Activated T-helper 2 cell treated with anti-CD3 and anti-CD28 coated beads, Interferon-gamma antibody, Interleukin-2, Interleukin-4, amounts not matched to agents 10 μg/mL and 5 μg/mL and 100 μg/mL, durations not matched to agents 14 hours and 24 hours and 36 hours (primary cell): ENCODE measurements at regions of chr3 and their contacts with region 1.

Region 1: DNA sequence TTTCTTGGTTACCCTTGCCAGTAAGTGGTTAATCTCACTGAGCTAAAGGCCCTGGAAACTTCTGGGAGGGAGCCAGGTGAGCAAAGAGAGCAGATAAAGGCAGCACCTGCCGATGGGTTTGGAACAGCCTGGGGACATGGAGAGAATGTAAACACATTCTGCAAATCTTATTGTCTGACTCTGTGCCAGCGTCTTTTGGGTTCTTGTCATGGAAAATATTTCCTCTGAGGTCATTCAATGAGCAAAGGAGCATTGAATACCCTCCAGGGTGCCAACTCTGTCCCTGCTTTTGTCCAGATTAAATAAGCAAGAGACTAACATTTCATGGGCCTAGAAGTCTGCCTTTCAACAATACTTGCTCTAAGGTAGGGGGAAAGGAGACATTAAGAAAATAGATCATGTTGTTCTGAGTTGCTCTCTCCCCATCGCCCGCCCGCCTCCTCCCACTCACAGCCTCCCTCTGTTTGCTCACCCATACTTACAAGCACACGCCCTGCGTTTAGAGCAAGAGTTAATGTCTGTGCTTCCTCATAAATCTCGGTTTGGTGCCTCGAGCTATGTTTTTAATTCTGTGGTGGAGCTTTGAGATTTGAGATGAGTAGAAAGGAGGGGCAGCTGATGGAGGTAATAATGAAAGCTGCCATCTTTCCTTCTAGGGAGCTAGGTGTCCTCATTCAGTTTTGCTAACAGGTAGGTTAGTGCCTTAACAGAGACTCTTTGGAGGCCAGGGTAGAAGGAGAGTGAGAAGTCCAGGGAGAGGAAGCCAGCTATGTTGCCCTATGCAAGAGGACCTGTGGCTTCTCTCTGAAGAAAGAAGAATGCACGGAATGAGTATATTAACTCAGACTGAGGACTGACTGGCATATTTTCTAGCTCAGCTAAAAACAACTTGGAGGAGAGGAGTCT is 132.9 kb downstream of the TPRG1 start:
- DNase-seq: no peak
- H3K4me3 Mint-ChIP-seq: peak overlapping the region; percentile 71
- H3K27ac Mint-ChIP-seq: peak overlapping the region; percentile 98
- H3K4me1 Mint-ChIP-seq: peaks cover 75% of the 10 kb centered on the region
- H3K27me3 Mint-ChIP-seq: no peaks in the 10 kb centered on the region

Region 2: GRCh38 chr3:189233225-189233858 is 71.4 kb before region 1 on chr3:
- intact Hi-C with region 1: loop called (anchors 2 kb)
- DNase-seq: no peak
- H3K4me3 Mint-ChIP-seq: no peak overlapping the region
- H3K27ac Mint-ChIP-seq: no peak overlapping the region
- H3K4me1 Mint-ChIP-seq: peaks cover 48% of the 10 kb centered on the region
- H3K27me3 Mint-ChIP-seq: peaks cover 18% of the 10 kb centered on the region

Region 3: DNA sequence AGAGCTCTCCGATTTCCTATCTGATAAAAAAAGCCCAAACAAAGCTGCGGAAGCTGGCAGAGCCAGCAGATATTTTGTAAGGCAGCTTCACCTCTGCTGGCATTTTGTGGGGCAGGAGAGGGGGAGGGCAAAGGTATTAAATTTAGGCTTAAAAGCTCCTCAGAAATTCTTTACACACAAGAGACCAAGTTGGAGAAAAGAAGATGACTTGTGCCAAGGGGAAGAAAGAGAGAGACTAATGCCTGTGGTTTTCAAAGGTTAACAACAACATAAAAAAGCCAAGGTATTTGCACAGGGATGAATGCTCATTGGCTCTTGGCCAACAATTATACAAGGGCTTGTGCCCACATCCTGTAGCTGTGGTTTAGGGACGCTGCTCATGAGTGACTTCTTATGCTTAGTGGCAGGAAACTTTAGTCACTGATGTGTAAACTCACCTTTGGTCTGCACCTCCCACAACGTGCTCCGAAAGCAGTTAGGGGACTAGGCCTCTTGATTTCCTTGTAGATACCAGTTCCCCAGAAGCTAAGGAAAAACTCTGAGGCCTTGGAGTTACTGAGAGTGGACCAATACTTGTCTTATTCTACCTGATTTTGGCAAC is 19.9 kb after region 1 on chr3:
- intact Hi-C with region 1: loop called (anchors 1 kb)
- DNase-seq: peak; percentile 88
- H3K4me3 Mint-ChIP-seq: peak overlapping the region; percentile 82
- H3K27ac Mint-ChIP-seq: peak overlapping the region; percentile 100
- H3K4me1 Mint-ChIP-seq: peaks cover 83% of the 10 kb centered on the region
- H3K27me3 Mint-ChIP-seq: no peaks in the 10 kb centered on the region

Region 4: DNA sequence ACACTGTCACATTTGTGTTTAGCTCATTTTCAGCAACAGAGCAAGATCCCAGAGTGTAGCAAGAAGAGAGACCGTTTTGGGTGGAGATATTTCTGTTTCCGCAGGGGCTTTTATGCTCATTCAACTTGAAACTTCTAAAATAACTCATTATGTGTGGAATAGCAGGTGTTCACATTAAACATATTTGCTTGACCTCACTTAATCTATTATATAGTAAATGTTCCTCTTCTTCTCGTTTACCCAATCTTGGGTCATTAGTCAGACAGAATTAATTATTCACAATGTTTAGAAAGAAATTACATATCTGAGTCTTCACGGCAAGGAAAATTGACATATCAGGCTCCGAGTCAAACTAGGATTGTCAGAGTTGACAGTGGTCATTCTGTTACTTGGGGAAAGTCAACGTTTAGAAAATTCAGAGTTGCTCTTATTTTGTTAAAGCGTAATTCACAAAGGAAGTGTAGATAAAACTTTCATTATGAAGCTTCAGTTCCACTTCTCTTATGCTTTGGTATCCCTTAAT is 90.0 kb after region 1 on chr3:
- intact Hi-C with region 1: loop called (anchors 2 kb)
- DNase-seq: no peak
- H3K4me3 Mint-ChIP-seq: peak overlapping the region; percentile 6
- H3K27ac Mint-ChIP-seq: peak overlapping the region; percentile 84
- H3K4me1 Mint-ChIP-seq: peaks cover 40% of the 10 kb centered on the region
- H3K27me3 Mint-ChIP-seq: no peaks in the 10 kb centered on the region

Region 5: GRCh38 chr3:189621948-189622603 is 317.4 kb after region 1 on chr3:
- intact Hi-C with region 1: loop called (anchors 1 kb)
- DNase-seq: no peak
- H3K4me3 Mint-ChIP-seq: peak overlapping the region; percentile 37
- H3K27ac Mint-ChIP-seq: peak overlapping the region; percentile 90
- H3K4me1 Mint-ChIP-seq: peaks cover 47% of the 10 kb centered on the region
- H3K27me3 Mint-ChIP-seq: no peaks in the 10 kb centered on the region

Region 6: DNA sequence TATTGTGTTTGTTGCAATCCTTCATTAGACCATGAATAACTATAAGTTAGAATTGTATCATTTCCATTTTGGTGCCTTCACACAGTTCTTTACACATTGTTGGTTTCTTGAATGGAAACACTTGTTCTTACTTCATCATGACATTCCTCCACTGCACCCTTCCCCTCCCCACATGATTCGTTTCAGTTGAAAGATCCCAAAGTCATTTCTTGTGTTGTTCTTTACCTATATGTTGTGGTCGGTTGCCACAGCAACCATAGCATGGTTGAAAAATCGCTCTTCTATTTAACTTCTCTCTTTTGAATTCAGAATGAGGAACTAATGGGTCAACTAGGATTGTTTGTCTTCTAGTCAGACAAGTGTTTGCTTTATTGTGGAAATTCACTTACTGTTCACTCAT is 1312.5 kb after region 1 on chr3:
- intact Hi-C with region 1: loop called (anchors 5 kb)
- DNase-seq: peak; percentile 50
- H3K4me3 Mint-ChIP-seq: peak overlapping the region; percentile 40
- H3K27ac Mint-ChIP-seq: peak overlapping the region; percentile 97
- H3K4me1 Mint-ChIP-seq: peaks cover 77% of the 10 kb centered on the region
- H3K27me3 Mint-ChIP-seq: no peaks in the 10 kb centered on the region